ENCODE measurements at regions of chr2 and their contacts with region 1.

Region 1: DNA sequence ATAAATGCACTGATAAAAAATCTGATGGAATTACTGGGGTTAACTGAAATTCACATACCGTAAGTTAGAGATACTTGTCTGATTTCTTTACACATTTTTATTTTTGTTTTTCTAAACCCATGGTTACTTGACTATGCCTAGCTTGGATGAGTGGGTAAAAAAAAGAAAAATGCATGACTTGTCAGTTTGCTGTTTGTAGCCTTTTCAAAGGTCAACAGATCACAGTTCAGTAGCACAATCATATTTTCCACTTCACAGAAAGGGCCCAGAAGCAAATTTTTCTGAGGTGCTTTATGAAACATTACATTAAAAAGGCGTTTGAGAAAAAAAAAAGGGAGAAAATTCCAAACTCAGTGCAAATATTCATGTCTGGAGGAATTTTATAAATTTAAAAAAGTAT is 16.4 kb downstream of the SLC16A14 start:
- DNase-seq: no peak
- H3K4me3 ChIP-seq: no peak overlapping the region
- H3K4me3 Mint-ChIP-seq: no peak overlapping the region
- H3K27ac ChIP-seq: no peak overlapping the region
- H3K27ac Mint-ChIP-seq: no peak overlapping the region
- H3K4me1 ChIP-seq: no peaks in the 10 kb centered on the region
- H3K4me1 Mint-ChIP-seq: no peaks in the 10 kb centered on the region
- H3K27me3 ChIP-seq: no peaks in the 10 kb centered on the region
- H3K27me3 Mint-ChIP-seq: no peaks in the 10 kb centered on the region

Region 2: GRCh38 chr2:230007931-230008707 is 44.2 kb before region 1 on chr2:
- CTCF ChIA-PET with region 1: no interaction called
- POLR2A ChIA-PET with region 1: no interaction called
- DNase-seq: peak; percentile 58 to 75 (median 67)
- H3K4me3 ChIP-seq: no peak overlapping the region
- H3K4me3 Mint-ChIP-seq: peak overlapping the region in 2 of 7 donors; percentile 19 to 47
- H3K27ac ChIP-seq: no peak overlapping the region
- H3K27ac Mint-ChIP-seq: no peak overlapping the region
- H3K4me1 ChIP-seq: no peaks in the 10 kb centered on the region
- H3K4me1 Mint-ChIP-seq: peaks cover 2 to 7% (median 6%) of the 10 kb centered on the region in 3 donors
- H3K27me3 ChIP-seq: no peaks in the 10 kb centered on the region
- H3K27me3 Mint-ChIP-seq: peaks cover 0 to 2% of the 10 kb centered on the region in 2 donors

Region 3: GRCh38 chr2:230068016-230068650 is 15.8 kb after region 1 on chr2:
- CTCF ChIA-PET with region 1: interaction called, 10 read pairs
- POLR2A ChIA-PET with region 1: no interaction called
- DNase-seq: peak in 4 of 5 donors; percentile 4 to 52 (median 18)
- H3K4me3 ChIP-seq: peak overlapping the region; percentile 39
- H3K4me3 Mint-ChIP-seq: peak overlapping the region; percentile 81 to 96 (median 91)
- H3K27ac ChIP-seq: no peak overlapping the region
- H3K27ac Mint-ChIP-seq: peak overlapping the region in 1 of 8 donors; percentile 45
- H3K4me1 ChIP-seq: peaks cover 4% of the 10 kb centered on the region
- H3K4me1 Mint-ChIP-seq: peaks cover 20 to 21% (median 21%) of the 10 kb centered on the region in 3 donors
- H3K27me3 ChIP-seq: peaks cover 4% of the 10 kb centered on the region
- H3K27me3 Mint-ChIP-seq: peaks cover 12 to 23% of the 10 kb centered on the region in 2 donors